ENCODE measurements at regions of chr1 and their contacts with region 1.

Region 1: GRCh38 chr1:212070720-212071302 is 35.3 kb downstream of the DTL start:
- DNase-seq: peak; percentile 13
- ATAC-seq: peak; percentile 66
- H3K4me3 ChIP-seq: no peak overlapping the region
- H3K27ac ChIP-seq: no peak overlapping the region
- H3K4me1 ChIP-seq: no peaks in the 10 kb centered on the region
- H3K27me3 ChIP-seq: no peaks in the 10 kb centered on the region
- CTCF ChIP-seq: peak; percentile 56 to 87 (median 73)
- POLR2A ChIP-seq: no peak
- RAD21 ChIP-seq: peak; percentile 94

Region 2: DNA sequence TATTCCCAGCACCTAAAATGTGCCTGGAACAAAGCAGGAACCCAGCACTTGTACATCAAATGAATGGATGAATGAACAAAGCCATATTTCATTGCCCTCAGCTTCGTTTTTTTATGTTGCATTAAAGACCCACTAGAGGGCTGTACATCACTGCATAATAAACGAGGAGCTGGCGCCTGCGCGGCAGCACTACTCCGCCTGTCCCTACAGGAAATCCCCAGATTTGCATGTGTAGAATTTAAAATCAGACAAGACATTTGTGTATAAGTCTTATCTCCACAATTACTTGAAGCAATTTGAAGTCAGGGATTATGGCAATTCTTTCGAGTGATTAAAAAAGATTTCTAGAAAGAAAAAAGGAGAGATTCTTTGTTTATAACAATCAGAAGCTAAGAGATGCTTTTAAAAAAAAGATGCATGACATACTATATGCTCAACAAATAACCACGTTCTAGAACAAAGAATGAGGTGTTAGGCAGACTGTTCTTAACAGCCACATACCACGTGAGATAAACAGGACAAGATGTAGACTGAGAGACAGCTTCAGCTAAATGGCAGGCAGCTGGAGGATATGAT is 390.0 kb before region 1 on chr1:
- CTCF ChIA-PET with region 1: interaction called, 27 read pairs
- POLR2A ChIA-PET with region 1: no interaction called
- RAD21 ChIA-PET with region 1: interaction called, 4 to 5 read pairs
- intact Hi-C with region 1: no loop called
- DNase-seq: peak; percentile 85
- ATAC-seq: peak; percentile 88
- H3K4me3 ChIP-seq: no peak overlapping the region
- H3K27ac ChIP-seq: no peak overlapping the region
- H3K4me1 ChIP-seq: peaks cover 0 to 13% of the 10 kb centered on the region in 2 experiments; a peak in 3 of 4 replicates
- H3K27me3 ChIP-seq: no peaks in the 10 kb centered on the region
- CTCF ChIP-seq: peak; percentile 64 to 94 (median 75)
- POLR2A ChIP-seq: no peak
- RAD21 ChIP-seq: peak; percentile 97

Region 3: GRCh38 chr1:212132025-212132424 is 61.2 kb after region 1 on chr1:
- CTCF ChIA-PET with region 1: no interaction called
- POLR2A ChIA-PET with region 1: no interaction called
- RAD21 ChIA-PET with region 1: no interaction called
- intact Hi-C with region 1: loop called (anchors 10 kb)
- DNase-seq: no peak
- ATAC-seq: no peak
- H3K4me3 ChIP-seq: no peak overlapping the region
- H3K27ac ChIP-seq: no peak overlapping the region
- H3K4me1 ChIP-seq: no peaks in the 10 kb centered on the region
- H3K27me3 ChIP-seq: no peaks in the 10 kb centered on the region
- CTCF ChIP-seq: no peak
- POLR2A ChIP-seq: no peak
- RAD21 ChIP-seq: no peak

Region 4: DNA sequence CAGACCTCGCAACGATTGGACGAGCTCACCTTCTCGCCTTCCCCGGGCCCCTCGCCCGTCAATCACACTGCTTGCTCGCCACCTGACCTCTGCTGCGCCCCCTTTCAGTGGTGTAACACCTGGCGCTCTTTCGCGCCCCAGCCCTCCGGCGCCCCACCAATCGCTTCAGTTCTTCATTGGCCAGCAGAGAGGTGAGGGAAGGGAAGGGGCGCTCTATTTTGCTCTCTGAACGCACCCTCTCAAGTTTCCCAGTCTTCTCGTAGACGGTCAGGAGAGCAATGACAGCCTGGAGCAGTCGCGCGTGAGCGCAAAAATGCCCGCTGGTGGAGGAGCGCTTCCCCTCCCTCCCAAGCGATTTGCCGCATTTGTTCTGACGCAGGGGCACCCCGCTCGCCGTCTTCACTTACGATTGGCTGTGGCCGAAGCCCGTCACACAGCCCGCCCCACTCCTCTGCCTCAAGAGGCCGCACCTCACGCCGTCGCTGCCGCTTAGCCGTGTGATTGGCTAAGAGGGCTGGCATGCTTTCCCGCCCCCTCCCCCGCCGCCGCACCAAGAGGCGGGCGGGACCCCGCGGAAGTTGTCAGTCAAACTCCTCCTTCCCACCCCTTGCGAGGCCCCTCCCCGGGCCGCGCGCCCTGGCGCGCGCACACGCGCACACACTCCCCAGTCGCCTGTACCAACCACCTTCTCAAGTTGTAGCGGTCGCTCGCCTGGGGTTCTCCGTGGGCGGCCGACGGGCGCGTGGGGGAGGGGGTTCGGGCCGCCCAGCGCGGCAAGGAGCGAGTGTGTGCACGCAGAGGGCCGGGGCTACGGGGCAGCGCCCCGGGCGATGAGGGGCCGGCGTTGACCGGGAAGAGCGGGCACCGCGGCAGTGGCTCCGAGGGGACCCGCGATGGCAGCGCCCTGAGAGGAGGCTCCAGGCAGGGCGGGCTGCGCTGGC is 214.2 kb after region 1 on chr1 and contains the start of gene PPP2R5A:
- CTCF ChIA-PET with region 1: interaction called, 31 read pairs
- POLR2A ChIA-PET with region 1: interaction called, 4 read pairs
- RAD21 ChIA-PET with region 1: no interaction called
- intact Hi-C with region 1: no loop called
- DNase-seq: peak; percentile 98
- ATAC-seq: peak; percentile 91
- H3K4me3 ChIP-seq: peak within 1 kb of the TSS; percentile 83 to 86
- H3K27ac ChIP-seq: peak within 1 kb of the TSS; percentile 95
- H3K4me1 ChIP-seq: peaks cover 24 to 28% of the 10 kb centered on the region in 2 experiments; a peak in 3 of 4 replicates
- H3K27me3 ChIP-seq: no peaks in the 10 kb centered on the region
- CTCF ChIP-seq: peak in 1 of 3 experiments; percentile 23; a peak in 1 of 6 replicates
- POLR2A ChIP-seq: peak; percentile 76
- RAD21 ChIP-seq: no peak
- total RNA-seq, gene PPP2R5A: 33.1 TPM

Region 5: GRCh38 chr1:212291505-212292134 is 220.8 kb after region 1 on chr1:
- CTCF ChIA-PET with region 1: interaction called, 31 read pairs
- POLR2A ChIA-PET with region 1: interaction called, 4 read pairs
- RAD21 ChIA-PET with region 1: interaction called, 6 to 7 read pairs
- intact Hi-C with region 1: loop called (anchors 1 kb)
- DNase-seq: peak; percentile 27
- ATAC-seq: peak; percentile 87
- H3K4me3 ChIP-seq: no peak overlapping the region
- H3K27ac ChIP-seq: peak overlapping the region; percentile 66
- H3K4me1 ChIP-seq: peaks cover 31 to 42% of the 10 kb centered on the region in 2 experiments
- H3K27me3 ChIP-seq: no peaks in the 10 kb centered on the region
- CTCF ChIP-seq: peak; percentile 71 to 81 (median 76); a peak in 5 of 6 replicates
- POLR2A ChIP-seq: no peak
- RAD21 ChIP-seq: peak; percentile 88

Region 6: DNA sequence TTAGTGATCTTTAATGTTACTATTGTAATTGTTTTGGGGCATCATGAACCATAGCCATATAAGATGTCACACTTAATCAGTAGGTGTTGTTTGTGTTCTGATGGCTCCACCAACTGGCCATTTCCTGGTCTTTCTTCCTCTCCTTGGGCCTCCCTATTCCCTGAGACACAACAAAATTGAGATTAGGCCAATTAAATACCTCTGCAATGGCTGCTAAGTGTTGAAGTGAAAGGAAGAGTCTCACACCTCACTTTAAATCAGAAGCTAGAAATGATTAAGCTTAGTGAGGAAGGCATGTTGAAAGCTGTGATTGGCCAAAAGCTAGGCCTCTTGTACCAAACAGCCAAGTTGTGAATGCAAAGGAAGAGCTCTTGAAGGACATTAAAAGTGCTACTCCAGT is 245.1 kb after region 1 on chr1:
- CTCF ChIA-PET with region 1: interaction called, 18 read pairs
- POLR2A ChIA-PET with region 1: no interaction called
- RAD21 ChIA-PET with region 1: interaction called in 1 of 2 experiments, 6 read pairs
- intact Hi-C with region 1: loop called (anchors 5 kb)
- DNase-seq: peak; percentile 21
- ATAC-seq: peak; percentile 87
- H3K4me3 ChIP-seq: no peak overlapping the region
- H3K27ac ChIP-seq: no peak overlapping the region
- H3K4me1 ChIP-seq: peaks cover 2 to 9% of the 10 kb centered on the region in 2 experiments; a peak in 3 of 4 replicates
- H3K27me3 ChIP-seq: no peaks in the 10 kb centered on the region
- CTCF ChIP-seq: peak; percentile 32 to 50 (median 45); a peak in 4 of 6 replicates
- POLR2A ChIP-seq: no peak
- RAD21 ChIP-seq: peak; percentile 69

Region 7: GRCh38 chr1:212368073-212368484 is 297.3 kb after region 1 on chr1:
- CTCF ChIA-PET with region 1: interaction called, 42 read pairs
- POLR2A ChIA-PET with region 1: no interaction called
- RAD21 ChIA-PET with region 1: interaction called, 5 read pairs
- intact Hi-C with region 1: loop called (anchors 1 kb)
- DNase-seq: peak; percentile 66
- ATAC-seq: peak; percentile 98
- H3K4me3 ChIP-seq: no peak overlapping the region
- H3K27ac ChIP-seq: no peak overlapping the region
- H3K4me1 ChIP-seq: no peaks in the 10 kb centered on the region
- H3K27me3 ChIP-seq: no peaks in the 10 kb centered on the region
- CTCF ChIP-seq: peak; percentile 76 to 96 (median 92); a peak in 5 of 6 replicates
- POLR2A ChIP-seq: no peak
- RAD21 ChIP-seq: peak; percentile 92